ENCODE measurements at regions of chrX and their contacts with region 1.

Region 1: GRCh38 chrX:53683556-53684414 is 2.7 kb downstream of the HUWE1 start:
- DNase-seq: peak; percentile 99
- H3K4me3 ChIP-seq: peak overlapping the region; percentile 91
- H3K27ac ChIP-seq: peak overlapping the region; percentile 96
- H3K4me1 ChIP-seq: peaks cover 9% of the 10 kb centered on the region
- H3K27me3 ChIP-seq: no peaks in the 10 kb centered on the region

Region 2: DNA sequence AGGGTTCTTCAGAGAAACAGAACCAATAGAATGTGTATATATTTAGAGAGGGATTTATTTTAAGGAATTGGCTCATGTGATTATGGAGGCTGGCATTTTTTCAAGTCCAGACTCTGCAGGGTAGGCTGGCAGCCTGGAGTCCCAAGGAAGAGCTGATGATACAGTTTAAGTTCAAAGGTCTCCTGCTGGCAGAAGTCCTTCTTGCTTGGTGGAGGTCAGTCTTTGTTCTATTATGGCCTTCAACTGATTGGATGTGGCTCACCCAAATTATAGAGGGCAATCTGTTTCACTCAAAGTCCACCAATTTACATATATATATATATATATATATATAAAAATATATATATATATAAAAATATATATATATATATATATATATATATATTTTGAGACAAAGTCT is 197.5 kb before region 1 on chrX:
- in situ Hi-C with region 1: no loop called
- DNase-seq: no peak
- H3K4me3 ChIP-seq: no peak overlapping the region
- H3K27ac ChIP-seq: no peak overlapping the region
- H3K4me1 ChIP-seq: peaks cover 8% of the 10 kb centered on the region; the same call in 1 of the 2 replicates
- H3K27me3 ChIP-seq: no peaks in the 10 kb centered on the region

Region 3: GRCh38 chrX:53831662-53832635 is 148.2 kb after region 1 on chrX:
- in situ Hi-C with region 1: loop called (anchors 10 kb)
- DNase-seq: peak; percentile 42
- H3K4me3 ChIP-seq: no peak overlapping the region
- H3K27ac ChIP-seq: no peak overlapping the region
- H3K4me1 ChIP-seq: no peaks in the 10 kb centered on the region
- H3K27me3 ChIP-seq: no peaks in the 10 kb centered on the region